GM13977 (cell line): ENCODE measurements at regions of chr17 and their contacts with region 1.

Region 1: GRCh38 chr17:4966844-4967538 is 626 bp downstream of the SPAG7 start:
- DNase-seq: peak; percentile 99
- CTCF ChIP-seq: no peak

Region 2: DNA sequence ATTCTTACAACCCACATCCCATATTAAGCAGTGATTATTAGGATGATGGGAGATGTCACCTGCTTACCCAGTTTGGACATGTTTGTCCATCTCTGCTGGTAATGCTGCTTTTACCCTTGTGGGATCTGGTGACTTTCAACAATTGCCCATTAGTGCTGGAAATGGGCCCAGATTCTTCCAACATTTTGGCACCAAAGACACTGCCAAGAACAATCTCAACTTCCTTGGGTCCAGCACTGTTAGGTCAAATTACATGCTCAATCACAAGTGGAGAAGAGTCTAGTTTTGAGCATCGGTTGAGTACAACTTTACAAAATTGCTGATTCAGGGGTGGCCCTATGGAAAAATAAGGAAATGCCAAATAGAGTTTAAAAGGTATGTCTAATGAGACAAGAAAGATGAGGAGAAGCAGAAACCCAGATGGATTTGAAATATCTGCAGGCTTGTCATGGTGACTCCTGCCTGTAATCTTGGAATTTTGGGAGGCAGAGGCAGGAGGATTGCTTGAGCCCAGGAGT is 98.3 kb after region 1 on chr17:
- in situ Hi-C with region 1: loop called (anchors 10 kb)
- DNase-seq: no peak
- CTCF ChIP-seq: no peak